ENCODE measurements at regions of chr6 and their contacts with region 1.

Region 1: DNA sequence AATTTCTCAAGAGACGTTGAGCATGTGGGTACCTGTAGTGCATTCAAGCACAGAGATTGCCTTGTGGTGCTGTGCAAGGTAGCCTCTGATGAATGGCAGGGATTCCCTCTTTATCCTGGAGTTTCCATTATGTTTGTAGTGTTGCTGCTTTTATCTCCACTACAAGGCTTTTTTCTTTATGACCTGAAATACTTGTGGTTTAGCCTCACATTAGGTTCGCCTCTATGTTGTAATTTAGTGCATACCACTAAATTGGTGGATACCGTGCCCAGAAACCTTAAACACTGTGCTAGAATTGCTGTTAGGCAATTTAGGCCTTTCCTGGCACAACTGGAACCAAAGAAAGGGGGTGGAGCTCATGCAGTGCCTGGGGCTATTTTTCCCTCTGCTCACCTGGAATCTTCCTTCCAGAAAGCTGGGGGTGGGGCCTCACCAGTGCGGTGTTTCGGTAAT is 76.7 kb downstream of the NCOA7 start:
- DNase-seq: no peak

Region 2: DNA sequence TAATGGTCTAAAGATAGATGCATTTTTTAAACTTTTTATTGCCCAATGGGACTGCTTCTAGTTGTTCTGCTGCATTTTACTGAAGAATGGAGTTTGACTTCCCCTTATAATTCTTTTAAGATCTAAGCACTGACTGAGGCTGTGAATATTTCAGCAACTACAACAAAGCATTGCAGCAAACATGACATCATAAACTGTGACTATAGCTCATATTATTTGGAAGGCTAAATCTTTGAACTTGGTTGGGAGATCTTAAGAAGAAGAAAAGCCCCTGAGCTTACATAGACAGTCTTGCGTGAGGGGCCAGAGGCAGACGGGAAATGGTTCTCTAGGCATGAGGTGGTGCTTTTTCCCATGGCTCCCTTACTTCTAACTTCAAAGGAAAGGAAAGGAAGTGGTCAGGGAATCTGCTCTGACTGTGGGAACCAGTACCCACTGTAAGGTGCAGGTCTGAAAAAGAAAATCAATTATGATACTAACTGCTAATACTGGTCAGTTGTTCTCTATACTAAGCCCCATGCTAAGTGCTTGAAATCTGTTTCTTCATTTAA is 103.3 kb before region 1 on chr6:
- intact Hi-C with region 1: no loop called
- DNase-seq: no peak

Region 3: GRCh38 chr6:125956506-125957390 is 89.2 kb after region 1 on chr6 and contains the start of gene HINT3:
- intact Hi-C with region 1: loop called (anchors 10 kb)
- DNase-seq: peak; percentile 96 to 100 (median 98)